Activated CD4-positive, alpha-beta T cell treated with anti-CD3 and anti-CD28 coated beads, Interleukin-2, amount 10 ng/mL, durations not matched to agents 24 days and 14 days (primary cell): ENCODE measurements at regions of chr11 and their contacts with region 1.

Region 1: GRCh38 chr11:7665473-7666291 is 7.6 kb downstream of the CYB5R2 start:
- DNase-seq: peak; percentile 91
- H3K4me3 Mint-ChIP-seq: no peak overlapping the region
- H3K27ac Mint-ChIP-seq: no peak overlapping the region
- H3K4me1 Mint-ChIP-seq: peaks cover 4% of the 10 kb centered on the region
- H3K27me3 Mint-ChIP-seq: peaks cover 2% of the 10 kb centered on the region

Region 2: GRCh38 chr11:7098235-7098832 is 567.3 kb before region 1 on chr11:
- intact Hi-C with region 1: loop called (anchors 1 kb)
- DNase-seq: peak; percentile 70
- H3K4me3 Mint-ChIP-seq: no peak overlapping the region
- H3K27ac Mint-ChIP-seq: no peak overlapping the region
- H3K4me1 Mint-ChIP-seq: no peaks in the 10 kb centered on the region
- H3K27me3 Mint-ChIP-seq: peaks cover 8% of the 10 kb centered on the region

Region 3: DNA sequence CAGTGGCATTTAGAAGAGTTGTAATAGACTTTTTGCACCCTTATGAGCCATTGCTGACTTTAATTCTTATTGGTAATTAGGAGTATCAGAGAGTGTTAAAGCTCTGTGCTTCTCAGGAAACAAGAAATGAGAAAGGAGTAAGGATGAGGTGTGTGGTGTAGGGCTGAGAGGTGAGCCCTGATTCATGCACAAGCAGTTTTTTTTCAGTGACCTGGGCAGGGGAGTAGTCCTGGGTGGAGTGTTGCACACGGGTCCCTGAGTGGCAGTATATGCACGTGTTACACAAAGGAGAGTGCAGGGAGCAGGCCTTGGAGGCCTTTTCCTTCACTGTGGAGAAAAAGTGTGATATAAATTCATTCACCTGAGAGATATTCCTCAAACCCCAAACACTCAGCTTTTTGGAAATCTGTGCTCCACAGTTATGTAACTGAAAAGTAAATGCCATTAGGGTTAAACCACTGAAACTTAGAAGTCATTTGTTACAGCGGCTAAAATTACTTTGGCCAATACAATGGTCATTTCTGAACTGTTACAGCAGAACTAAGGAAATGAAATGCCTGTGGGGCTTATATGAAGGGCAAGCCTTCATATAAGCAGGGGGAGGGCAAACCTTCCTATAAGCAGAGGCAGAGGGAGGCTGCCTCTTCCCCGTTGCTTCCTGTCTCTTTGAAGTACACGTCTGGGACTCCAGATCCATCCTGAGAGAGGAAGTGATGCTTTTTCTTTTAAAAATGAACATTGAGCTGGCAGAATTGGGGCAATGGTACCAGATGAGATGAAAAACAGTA is 242.9 kb before region 1 on chr11:
- intact Hi-C with region 1: no loop called
- DNase-seq: peak; percentile 52
- H3K4me3 Mint-ChIP-seq: no peak overlapping the region
- H3K27ac Mint-ChIP-seq: no peak overlapping the region
- H3K4me1 Mint-ChIP-seq: peaks cover 8% of the 10 kb centered on the region
- H3K27me3 Mint-ChIP-seq: peaks cover 1% of the 10 kb centered on the region

Region 4: DNA sequence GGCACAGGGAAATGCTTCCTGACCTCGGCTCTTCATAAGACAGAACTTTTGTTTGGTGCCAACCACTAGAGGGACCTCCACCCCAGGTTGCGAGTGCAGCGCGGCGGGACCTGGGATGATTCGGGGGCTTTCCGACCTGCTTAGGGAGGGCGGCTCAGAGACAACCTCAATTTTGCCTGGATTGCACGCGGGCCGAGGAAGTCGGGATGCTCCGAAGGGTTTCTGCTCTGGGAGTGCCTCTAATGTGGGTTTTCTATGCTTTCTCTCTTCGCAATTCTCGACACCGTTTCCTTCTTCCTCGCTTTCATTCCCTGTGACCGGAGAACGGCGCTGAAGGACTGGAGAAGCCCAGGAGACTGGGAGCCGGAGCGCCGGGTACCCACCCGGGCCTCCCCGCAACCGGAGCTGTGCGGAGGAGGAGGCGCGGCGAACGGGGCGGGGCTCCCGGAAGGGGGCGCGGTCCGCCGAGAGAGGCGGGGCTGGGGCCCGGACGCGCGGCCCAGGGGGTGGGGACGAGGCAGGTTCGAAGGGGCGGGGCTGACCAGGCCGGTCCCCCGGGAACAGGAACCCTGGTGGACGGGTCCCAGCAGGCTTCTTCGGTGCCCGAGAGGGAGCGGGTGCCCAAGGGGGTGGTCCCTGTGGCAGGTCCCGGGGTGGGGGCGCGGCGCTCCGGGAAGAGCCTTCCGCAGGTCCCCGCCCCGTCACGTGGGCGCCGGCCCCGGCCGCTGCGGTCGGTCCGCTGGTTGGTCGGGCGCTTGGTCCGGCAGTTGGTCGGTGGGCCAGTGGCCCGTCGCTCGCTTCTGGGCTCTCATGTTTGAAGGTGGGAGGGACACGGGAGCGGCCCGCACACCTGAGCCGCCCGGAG is 152.2 kb before region 1 on chr11 and contains the start of gene PPFIBP2:
- intact Hi-C with region 1: loop called (anchors 1 kb)
- DNase-seq: peak; percentile 97
- H3K4me3 Mint-ChIP-seq: peak within 1 kb of the TSS; percentile 90
- H3K27ac Mint-ChIP-seq: peak within 1 kb of the TSS; percentile 84
- H3K4me1 Mint-ChIP-seq: peaks cover 12% of the 10 kb centered on the region
- H3K27me3 Mint-ChIP-seq: peaks cover 30% of the 10 kb centered on the region
- total RNA-seq, gene PPFIBP2: 1.2 and 1.6 TPM in 2 replicates

Region 5: DNA sequence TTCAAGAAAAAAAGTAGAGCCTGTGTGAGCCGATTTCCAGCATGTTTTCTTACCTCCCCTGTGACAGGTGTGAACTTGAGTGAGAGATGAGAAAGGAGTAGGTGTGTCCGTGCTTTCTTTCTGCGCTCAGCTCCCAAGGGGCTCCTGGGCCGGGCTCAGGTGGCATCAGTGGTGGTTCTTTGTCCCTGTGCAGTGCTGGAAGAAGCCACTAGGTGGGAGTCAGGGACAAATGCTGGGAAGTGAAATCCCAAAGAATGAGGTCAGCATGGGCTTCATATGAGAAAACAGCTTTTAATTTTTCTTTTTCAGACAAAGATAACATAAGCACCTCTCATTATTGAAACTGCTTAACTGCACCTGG is 94.1 kb before region 1 on chr11:
- intact Hi-C with region 1: loop called (anchors 2 kb)
- DNase-seq: peak; percentile 62
- H3K4me3 Mint-ChIP-seq: no peak overlapping the region
- H3K27ac Mint-ChIP-seq: no peak overlapping the region
- H3K4me1 Mint-ChIP-seq: peaks cover 6% of the 10 kb centered on the region
- H3K27me3 Mint-ChIP-seq: peaks cover 45% of the 10 kb centered on the region

Region 6: DNA sequence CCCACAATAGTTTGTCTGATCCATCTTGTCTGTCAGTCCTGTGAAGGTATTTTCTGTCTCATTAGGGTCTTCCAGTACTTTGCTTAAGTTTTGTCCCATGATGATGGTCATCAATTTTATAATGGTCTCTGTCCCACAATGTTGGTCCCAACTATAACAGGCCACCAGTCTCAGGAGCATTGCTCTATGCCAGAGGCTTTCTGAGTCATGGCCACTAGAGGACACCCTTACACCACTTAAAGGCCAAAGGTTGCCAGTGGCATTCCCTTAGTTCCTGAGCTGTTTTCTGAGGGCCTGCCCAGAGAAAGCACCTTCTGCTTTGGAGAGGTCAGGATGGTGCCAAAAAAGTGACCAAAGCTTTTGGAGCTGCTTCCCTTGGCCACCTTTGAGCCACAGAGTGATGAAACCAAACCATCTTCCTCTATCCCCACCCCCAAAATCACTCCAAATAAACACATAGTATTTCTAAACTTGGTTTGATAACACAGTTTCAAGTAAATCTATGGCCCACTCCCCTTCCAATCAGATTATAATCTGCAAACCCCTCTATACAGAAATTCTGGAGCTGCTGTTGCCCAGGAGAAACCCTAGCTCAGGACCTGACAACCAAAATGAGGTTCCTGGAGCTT is 340.8 kb after region 1 on chr11:
- intact Hi-C with region 1: no loop called
- DNase-seq: peak; percentile 81
- H3K4me3 Mint-ChIP-seq: no peak overlapping the region
- H3K27ac Mint-ChIP-seq: no peak overlapping the region
- H3K4me1 Mint-ChIP-seq: no peaks in the 10 kb centered on the region
- H3K27me3 Mint-ChIP-seq: peaks cover 2% of the 10 kb centered on the region